Ovary (tissue), 10 donors: ENCODE measurements at regions of chr9 and their contacts with region 1.

Region 1: GRCh38 chr9:105157130-105157583 is 87.3 kb upstream of the SLC44A1 start:
- DNase-seq: peak; percentile 46 to 53 (median 50)
- H3K4me3 ChIP-seq: no peak overlapping the region
- H3K27ac ChIP-seq: no peak overlapping the region
- H3K4me1 ChIP-seq: no peaks in the 10 kb centered on the region
- H3K27me3 ChIP-seq: no peaks in the 10 kb centered on the region
- CTCF ChIP-seq: peak in 2 of 3 donors; percentile 53 to 58
- EP300 ChIP-seq: no peak
- POLR2A ChIP-seq: no peak

Region 2: GRCh38 chr9:104863180-104863883 is 293.8 kb before region 1 on chr9:
- intact Hi-C with region 1: loop called in 2 of 4 experiments (anchors 5 to 10 kb)
- DNase-seq: peak; percentile 50 to 57 (median 52)
- H3K4me3 ChIP-seq: no peak overlapping the region
- H3K27ac ChIP-seq: peak overlapping the region in 1 of 2 donors; percentile 10
- H3K4me1 ChIP-seq: peaks cover 23% of the 10 kb centered on the region
- H3K27me3 ChIP-seq: no peaks in the 10 kb centered on the region
- CTCF ChIP-seq: peak; percentile 28 to 73 (median 42)
- EP300 ChIP-seq: no peak
- POLR2A ChIP-seq: no peak

Region 3: DNA sequence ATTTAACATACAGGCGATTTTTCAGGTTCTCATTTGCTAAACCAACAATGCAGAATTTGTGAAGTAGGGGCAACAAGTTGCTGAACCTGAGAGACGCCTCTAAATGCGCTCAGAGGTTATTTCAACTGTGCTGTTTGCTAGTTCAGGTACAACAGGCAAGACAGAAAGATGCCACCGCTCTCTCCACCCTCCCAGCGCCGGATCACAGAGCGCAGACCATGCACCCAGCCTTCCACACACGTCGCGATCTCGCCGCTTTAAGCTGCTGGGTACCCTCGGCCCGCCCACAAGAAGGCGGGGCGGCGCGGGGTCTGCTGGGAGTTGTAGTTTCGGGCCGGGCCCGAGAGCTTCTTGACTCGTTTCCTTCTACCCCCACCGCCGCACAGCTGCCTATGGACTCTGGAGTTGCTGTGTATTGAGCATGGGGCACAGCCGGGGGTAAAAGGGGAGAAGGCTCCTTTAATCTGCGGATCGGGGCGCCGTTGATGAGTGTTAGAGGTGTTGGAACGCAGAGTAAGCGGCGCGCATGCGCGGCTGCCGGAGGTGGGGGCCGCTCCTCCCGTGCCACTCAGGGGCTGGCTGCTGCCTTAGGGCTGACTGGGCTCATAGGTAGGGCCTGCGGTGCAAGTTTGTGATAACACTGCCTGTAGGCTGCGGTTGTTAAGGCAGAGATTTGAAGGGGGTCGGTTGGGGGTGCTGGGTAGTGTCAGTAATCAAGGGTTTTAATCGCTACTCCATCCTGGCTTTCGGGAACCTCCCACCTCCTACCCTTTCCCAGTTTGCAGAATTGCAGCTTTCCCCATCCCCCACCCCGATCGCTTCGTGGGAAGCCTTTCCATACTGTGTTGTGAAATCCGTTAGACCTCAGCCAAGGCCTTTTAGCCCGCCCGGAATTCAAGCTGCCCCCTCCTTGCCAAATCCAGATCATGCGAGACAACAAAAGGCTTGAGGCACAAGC is 188.9 kb before region 1 on chr9:
- intact Hi-C with region 1: loop called in 1 of 4 experiments (anchors 10 kb)
- DNase-seq: peak; percentile 85 to 92 (median 90)
- H3K4me3 ChIP-seq: peak overlapping the region; percentile 67
- H3K27ac ChIP-seq: peak overlapping the region; percentile 67 to 86
- H3K4me1 ChIP-seq: peaks cover 2% of the 10 kb centered on the region
- H3K27me3 ChIP-seq: no peaks in the 10 kb centered on the region
- CTCF ChIP-seq: no peak
- EP300 ChIP-seq: no peak
- POLR2A ChIP-seq: peak; percentile 16

Region 4: DNA sequence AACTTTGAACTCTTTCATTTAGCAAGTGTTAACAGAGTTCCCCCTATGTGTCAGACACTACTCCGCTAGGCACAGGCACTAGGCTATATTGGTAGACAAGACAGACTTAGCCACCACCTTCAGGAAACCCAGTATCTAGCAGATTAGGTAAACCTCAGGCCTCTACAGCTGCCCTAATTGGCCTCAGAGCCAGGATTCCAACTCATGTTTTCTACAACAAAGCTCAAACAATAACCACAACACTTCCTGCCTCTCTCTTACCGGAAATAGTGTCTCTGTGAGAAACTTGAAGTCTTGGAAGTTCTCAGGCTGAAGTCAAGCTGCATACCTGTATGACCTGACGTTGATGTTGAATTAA is 29.3 kb before region 1 on chr9:
- intact Hi-C with region 1: no loop called
- DNase-seq: no peak
- H3K4me3 ChIP-seq: no peak overlapping the region
- H3K27ac ChIP-seq: no peak overlapping the region
- H3K4me1 ChIP-seq: no peaks in the 10 kb centered on the region
- H3K27me3 ChIP-seq: no peaks in the 10 kb centered on the region
- CTCF ChIP-seq: no peak
- EP300 ChIP-seq: no peak
- POLR2A ChIP-seq: no peak

Region 5: GRCh38 chr9:105414947-105415661 is 257.9 kb after region 1 on chr9:
- intact Hi-C with region 1: loop called in 2 of 4 experiments (anchors 10 kb)
- DNase-seq: peak; percentile 44 to 73 (median 58)
- H3K4me3 ChIP-seq: no peak overlapping the region
- H3K27ac ChIP-seq: no peak overlapping the region
- H3K4me1 ChIP-seq: peaks cover 2% of the 10 kb centered on the region
- H3K27me3 ChIP-seq: no peaks in the 10 kb centered on the region
- CTCF ChIP-seq: peak; percentile 75 to 86 (median 81)
- EP300 ChIP-seq: no peak
- POLR2A ChIP-seq: no peak

Region 6: GRCh38 chr9:105425841-105426436 is 268.8 kb after region 1 on chr9:
- intact Hi-C with region 1: loop called in 1 of 4 experiments (anchors 10 kb)
- DNase-seq: no peak
- H3K4me3 ChIP-seq: no peak overlapping the region
- H3K27ac ChIP-seq: no peak overlapping the region
- H3K4me1 ChIP-seq: no peaks in the 10 kb centered on the region
- H3K27me3 ChIP-seq: no peaks in the 10 kb centered on the region
- CTCF ChIP-seq: no peak
- EP300 ChIP-seq: no peak
- POLR2A ChIP-seq: no peak